Activated T-helper 2 cell treated with anti-CD3 and anti-CD28 coated beads, Interferon-gamma antibody, Interleukin-2, Interleukin-4, amounts not matched to agents 10 μg/mL and 5 μg/mL and 100 μg/mL, durations not matched to agents 14 hours and 24 hours and 36 hours (primary cell): ENCODE measurements at regions of chr12 and their contacts with region 1.

Region 1: GRCh38 chr12:110776410-110776809 is 33.7 kb upstream of the PPP1CC start:
- DNase-seq: peak; percentile 24
- H3K4me3 Mint-ChIP-seq: peak overlapping the region; percentile 17
- H3K27ac Mint-ChIP-seq: peak overlapping the region; percentile 94
- H3K4me1 Mint-ChIP-seq: peaks cover 50% of the 10 kb centered on the region
- H3K27me3 Mint-ChIP-seq: no peaks in the 10 kb centered on the region

Region 2: DNA sequence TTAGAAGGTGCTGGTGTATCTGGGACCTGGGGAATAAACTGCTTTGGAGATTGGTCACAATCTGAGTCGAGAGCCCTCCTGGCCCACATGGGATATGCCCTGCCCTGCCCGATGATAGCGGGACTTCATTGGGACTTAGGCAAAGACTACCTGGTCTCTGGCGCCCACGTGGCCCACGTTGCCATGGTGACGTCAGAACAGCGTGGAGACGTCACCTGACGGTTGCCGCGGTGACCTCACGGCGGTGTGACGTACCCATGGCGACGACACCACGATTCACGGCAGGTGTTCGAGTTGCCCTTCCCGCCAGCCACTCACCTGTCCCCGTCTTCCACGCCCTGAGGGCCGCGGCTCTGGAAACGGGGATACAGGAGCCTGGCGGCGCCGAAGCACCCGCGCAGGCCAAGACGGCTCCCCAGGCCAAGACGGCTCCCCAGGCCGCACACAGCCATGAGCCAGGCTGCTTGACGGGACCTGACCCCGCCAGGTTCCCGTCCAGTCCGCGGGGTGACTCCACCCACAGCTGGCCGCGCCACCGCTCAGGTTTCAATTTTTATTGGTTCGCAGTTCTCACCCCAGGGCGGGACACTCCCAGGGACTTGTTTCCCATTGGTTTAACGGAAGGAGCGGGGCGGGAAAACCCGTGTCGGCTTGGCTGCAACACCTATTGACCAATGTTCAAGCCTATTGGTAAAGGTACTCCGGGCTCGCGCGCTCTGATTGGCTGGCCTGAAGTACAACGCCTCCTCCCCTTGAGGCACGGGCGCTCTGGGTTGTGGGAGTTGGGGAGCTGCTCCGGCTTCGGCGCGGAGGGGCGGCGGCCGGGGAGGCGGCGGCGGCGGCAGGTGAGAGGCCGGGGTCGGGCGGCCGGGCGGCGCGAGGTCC is 1203.1 kb before region 1 on chr12 and contains the starts of genes MMAB and MVK:
- intact Hi-C with region 1: loop called (anchors 5 kb)
- DNase-seq: peak; percentile 99
- H3K4me3 Mint-ChIP-seq: peak within 1 kb of the TSS; percentile 93
- H3K27ac Mint-ChIP-seq: peak within 1 kb of the TSS; percentile 92
- H3K4me1 Mint-ChIP-seq: peaks cover 30% of the 10 kb centered on the region
- H3K27me3 Mint-ChIP-seq: no peaks in the 10 kb centered on the region
- total RNA-seq, gene MMAB: 56.7 and 59.0 TPM in 2 replicates
- total RNA-seq, gene MVK: 28.7 and 33.6 TPM in 2 replicates

Region 3: GRCh38 chr12:110619534-110619953 is 156.9 kb before region 1 on chr12:
- intact Hi-C with region 1: loop called (anchors 2 kb)
- DNase-seq: no peak
- H3K4me3 Mint-ChIP-seq: peak overlapping the region; percentile 30
- H3K27ac Mint-ChIP-seq: peak overlapping the region; percentile 64
- H3K4me1 Mint-ChIP-seq: peaks cover 12% of the 10 kb centered on the region
- H3K27me3 Mint-ChIP-seq: no peaks in the 10 kb centered on the region

Region 4: GRCh38 chr12:110762891-110763290 is 13.5 kb before region 1 on chr12:
- intact Hi-C with region 1: loop called (anchors 1 kb)
- DNase-seq: no peak
- H3K4me3 Mint-ChIP-seq: no peak overlapping the region
- H3K27ac Mint-ChIP-seq: peak overlapping the region; percentile 60
- H3K4me1 Mint-ChIP-seq: peaks cover 5% of the 10 kb centered on the region
- H3K27me3 Mint-ChIP-seq: no peaks in the 10 kb centered on the region

Region 5: DNA sequence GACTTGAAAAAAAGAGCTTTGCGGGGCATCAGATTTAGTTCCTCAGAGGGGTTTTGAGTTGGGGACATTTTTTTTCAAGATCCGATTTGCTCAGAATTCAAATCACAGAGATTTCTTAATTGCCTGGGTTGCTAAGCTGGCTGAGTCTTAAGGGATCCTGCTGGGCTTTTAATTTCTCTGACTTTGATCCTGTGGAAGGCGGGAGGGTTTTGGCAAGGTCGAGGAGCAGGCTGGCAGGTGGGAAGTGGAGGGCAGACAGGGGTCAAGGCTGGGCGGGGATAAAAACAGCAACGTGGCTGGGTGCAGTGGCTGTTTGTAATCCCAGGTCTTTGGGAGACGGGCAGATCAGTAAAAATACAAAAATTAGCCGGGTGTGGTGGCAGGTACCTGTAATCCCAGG is 36.9 kb after region 1 on chr12:
- intact Hi-C with region 1: no loop called
- DNase-seq: no peak
- H3K4me3 Mint-ChIP-seq: no peak overlapping the region
- H3K27ac Mint-ChIP-seq: no peak overlapping the region
- H3K4me1 Mint-ChIP-seq: no peaks in the 10 kb centered on the region
- H3K27me3 Mint-ChIP-seq: peaks cover 14% of the 10 kb centered on the region

Region 6: GRCh38 chr12:110826592-110827200 is 50.3 kb after region 1 on chr12:
- intact Hi-C with region 1: loop called (anchors 5 kb)
- DNase-seq: peak; percentile 78
- H3K4me3 Mint-ChIP-seq: peak overlapping the region; percentile 39
- H3K27ac Mint-ChIP-seq: no peak overlapping the region
- H3K4me1 Mint-ChIP-seq: peaks cover 8% of the 10 kb centered on the region
- H3K27me3 Mint-ChIP-seq: peaks cover 7% of the 10 kb centered on the region